ENCODE measurements at regions of chr11 and their contacts with region 1.

Region 1: GRCh38 chr11:26134481-26135355 is 197.2 kb upstream of the ANO3 start:
- DNase-seq: no peak
- ATAC-seq: no peak

Region 2: GRCh38 chr11:26276798-26277424 is 142.2 kb after region 1 on chr11:
- intact Hi-C with region 1: loop called (anchors 10 kb)
- DNase-seq: no peak
- ATAC-seq: peak; percentile 39